ENCODE measurements at regions of chr1 and their contacts with region 1.

Region 1: GRCh38 chr1:182084487-182085316 is 23.2 kb upstream of the ZNF648 start:
- DNase-seq: peak; percentile 83
- ATAC-seq: peak; percentile 96
- H3K4me3 ChIP-seq: peak overlapping the region; percentile 25; the same call in 1 of the 2 replicates
- H3K27ac ChIP-seq: no peak overlapping the region
- H3K4me1 ChIP-seq: peaks cover 15% of the 10 kb centered on the region
- H3K27me3 ChIP-seq: no peaks in the 10 kb centered on the region
- CTCF ChIP-seq: peak; percentile 66

Region 2: GRCh38 chr1:182143154-182143657 is 58.5 kb after region 1 on chr1:
- CTCF ChIA-PET with region 1: interaction called, 8 read pairs
- POLR2A ChIA-PET with region 1: no interaction called
- intact Hi-C with region 1: loop called (anchors 2 kb)
- DNase-seq: peak; percentile 91
- ATAC-seq: peak; percentile 77
- H3K4me3 ChIP-seq: no peak overlapping the region
- H3K27ac ChIP-seq: peak overlapping the region; percentile 63; the same call in 1 of the 2 replicates
- H3K4me1 ChIP-seq: peaks cover 24% of the 10 kb centered on the region
- H3K27me3 ChIP-seq: no peaks in the 10 kb centered on the region
- CTCF ChIP-seq: peak; percentile 86

Region 3: GRCh38 chr1:182198049-182198501 is 113.4 kb after region 1 on chr1:
- CTCF ChIA-PET with region 1: no interaction called
- POLR2A ChIA-PET with region 1: no interaction called
- intact Hi-C with region 1: loop called (anchors 2 kb)
- DNase-seq: peak; percentile 21
- ATAC-seq: no peak
- H3K4me3 ChIP-seq: no peak overlapping the region
- H3K27ac ChIP-seq: no peak overlapping the region
- H3K4me1 ChIP-seq: no peaks in the 10 kb centered on the region
- H3K27me3 ChIP-seq: no peaks in the 10 kb centered on the region
- CTCF ChIP-seq: peak; percentile 59

Region 4: GRCh38 chr1:182397771-182398393 is 313.2 kb after region 1 on chr1:
- CTCF ChIA-PET with region 1: interaction called, 5 read pairs
- POLR2A ChIA-PET with region 1: no interaction called
- intact Hi-C with region 1: loop called (anchors 1 kb)
- DNase-seq: peak; percentile 51
- ATAC-seq: peak; percentile 29; the same call in 1 of the 2 replicates
- H3K4me3 ChIP-seq: no peak overlapping the region
- H3K27ac ChIP-seq: peak overlapping the region; percentile 34
- H3K4me1 ChIP-seq: peaks cover 17% of the 10 kb centered on the region
- H3K27me3 ChIP-seq: no peaks in the 10 kb centered on the region
- CTCF ChIP-seq: no peak

Region 5: DNA sequence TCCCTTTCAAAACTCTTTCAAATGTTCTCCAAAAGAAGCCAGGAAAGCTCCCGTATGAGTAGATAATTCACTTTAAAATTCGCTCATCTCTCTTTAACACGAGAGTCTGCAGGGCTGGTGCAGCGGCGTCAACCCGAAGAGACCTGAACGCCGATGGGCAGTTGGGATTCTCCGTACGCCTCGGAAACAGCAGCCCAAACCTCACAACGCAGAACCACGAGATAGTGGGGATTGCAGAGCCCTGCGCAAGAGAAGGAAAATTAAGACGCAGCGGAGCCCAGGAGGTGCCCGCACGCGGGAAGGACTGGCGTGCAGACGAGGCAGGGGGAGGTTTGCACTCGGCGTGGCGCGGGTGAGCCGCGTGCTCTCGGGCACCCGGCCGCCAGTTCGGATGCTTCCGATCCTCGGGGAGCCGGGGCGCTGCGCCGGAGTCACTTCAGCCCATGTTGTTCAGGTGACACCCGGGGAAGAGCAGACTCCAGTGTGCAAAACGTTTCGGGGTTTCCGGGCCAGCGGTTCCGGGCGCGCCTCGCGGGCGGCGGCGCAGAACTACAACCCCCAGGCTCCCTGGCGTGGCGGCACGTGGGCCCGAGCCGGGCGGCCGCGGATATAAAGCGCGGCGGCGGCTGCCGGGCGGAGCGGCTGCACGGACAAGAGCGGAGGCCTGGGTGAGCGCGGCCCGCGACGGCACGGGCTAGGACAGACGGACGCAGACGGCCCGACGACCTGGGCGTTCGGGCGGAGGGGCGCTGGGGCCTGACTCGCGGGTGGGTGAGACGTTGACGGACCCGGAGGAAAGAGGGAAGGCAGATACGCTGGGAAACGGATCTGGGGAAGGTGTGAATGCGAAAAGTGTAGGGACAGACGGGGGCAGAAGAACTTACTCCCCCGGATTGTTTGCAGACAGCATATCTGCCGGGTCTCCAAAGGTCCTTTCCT is 704.7 kb after region 1 on chr1 and contains the start of gene NPL:
- CTCF ChIA-PET with region 1: no interaction called
- POLR2A ChIA-PET with region 1: no interaction called
- intact Hi-C with region 1: loop called (anchors 10 kb)
- DNase-seq: peak; percentile 25
- ATAC-seq: peak; percentile 73
- H3K4me3 ChIP-seq: peak within 1 kb of the TSS; percentile 52
- H3K27ac ChIP-seq: no peak within 1 kb of the TSS
- H3K4me1 ChIP-seq: no peaks in the 10 kb centered on the region
- H3K27me3 ChIP-seq: peaks cover 54% of the 10 kb centered on the region
- CTCF ChIP-seq: no peak
- total RNA-seq, gene NPL: not detected in 2 replicates

Measured in PC-3 (cell line).